Endothelial cell of umbilical vein (primary cell): ENCODE measurements at regions of chr9 and their contacts with region 1.

Region 1: GRCh38 chr9:127734747-127735529 is at the start of gene TOR2A:
- DNase-seq: peak; percentile 98
- H3K4me3 ChIP-seq: peak within 1 kb of the TSS; percentile 23 to 73 (median 38)
- H3K27ac ChIP-seq: peak within 1 kb of the TSS; percentile 68
- H3K4me1 ChIP-seq: peaks cover 12% of the 10 kb centered on the region
- H3K27me3 ChIP-seq: no peaks in the 10 kb centered on the region
- CTCF ChIP-seq: peak; percentile 96 to 97
- POLR2A ChIP-seq: peak; percentile 68
- total RNA-seq, gene TOR2A: 17.1 and 19.3 TPM in 2 replicates

Region 2: GRCh38 chr9:127561619-127562500 is 173.1 kb before region 1 on chr9:
- CTCF ChIA-PET with region 1: interaction called, 10 read pairs
- POLR2A ChIA-PET with region 1: no interaction called
- dilution Hi-C with region 1: no loop called
- intact Hi-C with region 1: no loop called
- DNase-seq: peak; percentile 91
- H3K4me3 ChIP-seq: no peak overlapping the region
- H3K27ac ChIP-seq: peak overlapping the region; percentile 85
- H3K4me1 ChIP-seq: peaks cover 71% of the 10 kb centered on the region
- H3K27me3 ChIP-seq: no peaks in the 10 kb centered on the region
- CTCF ChIP-seq: no peak
- POLR2A ChIP-seq: no peak

Region 3: DNA sequence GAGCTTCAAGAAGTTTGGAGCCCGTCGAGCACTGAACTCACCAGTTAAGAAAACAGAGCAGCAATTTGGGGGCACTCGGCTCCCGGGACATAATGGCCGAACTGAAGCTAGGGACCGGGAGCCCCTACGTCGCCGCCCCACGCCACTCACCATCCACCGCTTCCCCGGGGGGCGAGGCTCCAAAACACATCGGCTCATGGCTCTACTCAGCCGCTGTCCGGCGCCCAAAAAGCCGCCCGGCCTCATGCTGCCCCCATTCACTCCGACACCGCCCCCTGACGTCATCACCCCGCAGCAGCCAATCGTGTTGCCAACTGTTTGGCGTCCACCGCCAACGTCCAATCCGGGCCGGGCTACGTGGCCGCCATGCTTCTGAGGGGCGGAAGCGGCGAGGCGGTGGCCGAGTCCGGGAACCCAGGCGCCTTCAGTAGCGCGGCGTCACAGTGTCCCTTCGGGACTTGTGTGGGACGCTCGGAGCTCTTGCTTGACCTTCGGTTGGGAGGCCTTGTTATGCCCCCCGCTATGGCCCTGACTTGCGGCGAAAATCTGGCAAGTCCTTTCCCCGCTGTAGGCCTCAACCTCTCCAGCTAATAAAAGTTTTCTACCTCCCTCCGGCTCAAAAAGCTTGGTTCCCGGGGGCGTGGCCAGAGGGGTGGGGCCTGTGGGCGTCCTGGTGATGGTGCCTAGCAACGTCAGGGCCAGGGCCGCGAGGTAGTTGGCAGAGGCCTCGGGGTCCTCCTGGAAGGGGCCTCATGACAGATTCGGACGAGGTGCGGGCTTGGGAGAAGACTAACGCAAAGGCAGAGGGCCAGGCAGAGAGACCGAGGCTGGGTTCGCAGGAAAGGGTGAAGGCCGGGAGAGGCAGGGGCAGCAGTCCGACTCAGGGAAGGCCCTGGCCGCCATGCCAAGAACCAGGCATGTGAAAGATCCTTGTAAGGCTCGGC is 19.3 kb before region 1 on chr9 and contains the starts of genes PTRH1 and TTC16:
- CTCF ChIA-PET with region 1: interaction called, 30 read pairs
- POLR2A ChIA-PET with region 1: interaction called, 3 read pairs
- dilution Hi-C with region 1: no loop called
- intact Hi-C with region 1: no loop called
- DNase-seq: peak; percentile 95
- H3K4me3 ChIP-seq: peak within 1 kb of the TSS; percentile 67 to 88 (median 85)
- H3K27ac ChIP-seq: peak within 1 kb of the TSS; percentile 36
- H3K4me1 ChIP-seq: peaks cover 5% of the 10 kb centered on the region
- H3K27me3 ChIP-seq: no peaks in the 10 kb centered on the region
- CTCF ChIP-seq: no peak
- POLR2A ChIP-seq: no peak
- total RNA-seq, gene PTRH1: 19.6 and 25.1 TPM in 2 replicates
- total RNA-seq, gene TTC16: not detected in 2 replicates

Region 4: GRCh38 chr9:127770905-127771569 is 36.1 kb after region 1 on chr9:
- CTCF ChIA-PET with region 1: interaction called, 30 read pairs
- POLR2A ChIA-PET with region 1: interaction called, 3 read pairs
- dilution Hi-C with region 1: no loop called
- intact Hi-C with region 1: loop called (anchors 1 kb)
- DNase-seq: peak; percentile 99
- H3K4me3 ChIP-seq: peak overlapping the region; percentile 35 to 79 (median 75)
- H3K27ac ChIP-seq: peak overlapping the region; percentile 96
- H3K4me1 ChIP-seq: peaks cover 39% of the 10 kb centered on the region
- H3K27me3 ChIP-seq: no peaks in the 10 kb centered on the region
- CTCF ChIP-seq: no peak
- POLR2A ChIP-seq: peak; percentile 93

Region 5: GRCh38 chr9:127910613-127911205 is 175.8 kb after region 1 on chr9:
- CTCF ChIA-PET with region 1: interaction called, 9 read pairs
- POLR2A ChIA-PET with region 1: no interaction called
- dilution Hi-C with region 1: no loop called
- intact Hi-C with region 1: loop called (anchors 1 kb)
- DNase-seq: peak; percentile 50
- H3K4me3 ChIP-seq: no peak overlapping the region
- H3K27ac ChIP-seq: no peak overlapping the region
- H3K4me1 ChIP-seq: peaks cover 21% of the 10 kb centered on the region
- H3K27me3 ChIP-seq: no peaks in the 10 kb centered on the region
- CTCF ChIP-seq: peak in 1 of 2 donors; percentile 19
- POLR2A ChIP-seq: no peak